ENCODE measurements at regions of chr17 and their contacts with region 1.

Region 1: DNA sequence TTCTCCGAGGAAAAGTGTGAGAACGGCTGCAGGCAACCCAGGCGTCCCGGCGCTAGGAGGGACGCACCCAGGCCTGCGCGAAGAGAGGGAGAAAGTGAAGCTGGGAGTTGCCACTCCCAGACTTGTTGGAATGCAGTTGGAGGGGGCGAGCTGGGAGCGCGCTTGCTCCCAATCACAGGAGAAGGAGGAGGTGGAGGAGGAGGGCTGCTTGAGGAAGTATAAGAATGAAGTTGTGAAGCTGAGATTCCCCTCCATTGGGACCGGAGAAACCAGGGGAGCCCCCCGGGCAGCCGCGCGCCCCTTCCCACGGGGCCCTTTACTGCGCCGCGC is at the start of gene ERBB2:
- DNase-seq: peak; percentile 79 to 87
- H3K4me3 ChIP-seq: peak within 1 kb of the TSS; percentile 84
- H3K4me3 Mint-ChIP-seq: peak within 1 kb of the TSS; percentile 99
- H3K27ac Mint-ChIP-seq: peak within 1 kb of the TSS; percentile 98
- H3K4me1 ChIP-seq: peaks cover 62% of the 10 kb centered on the region
- H3K4me1 Mint-ChIP-seq: peaks cover 42% of the 10 kb centered on the region
- H3K27me3 ChIP-seq: no peaks in the 10 kb centered on the region
- H3K27me3 Mint-ChIP-seq: no peaks in the 10 kb centered on the region
- CTCF ChIP-seq: no peak
- total RNA-seq, gene ERBB2: 121 and 124 TPM in 2 replicates

Region 2: GRCh38 chr17:39547713-39548478 is 151.9 kb before region 1 on chr17:
- CTCF ChIA-PET with region 1: no interaction called
- POLR2A ChIA-PET with region 1: no interaction called
- intact Hi-C with region 1: no loop called
- DNase-seq: peak; percentile 57 to 77
- H3K4me3 ChIP-seq: no peak overlapping the region
- H3K4me3 Mint-ChIP-seq: no peak overlapping the region
- H3K27ac Mint-ChIP-seq: no peak overlapping the region
- H3K4me1 ChIP-seq: no peaks in the 10 kb centered on the region
- H3K4me1 Mint-ChIP-seq: no peaks in the 10 kb centered on the region
- H3K27me3 ChIP-seq: no peaks in the 10 kb centered on the region
- H3K27me3 Mint-ChIP-seq: no peaks in the 10 kb centered on the region
- CTCF ChIP-seq: peak; percentile 90 to 98

Region 3: GRCh38 chr17:39563476-39563875 is 136.3 kb before region 1 on chr17:
- CTCF ChIA-PET with region 1: no interaction called
- POLR2A ChIA-PET with region 1: no interaction called
- intact Hi-C with region 1: no loop called
- DNase-seq: no peak
- H3K4me3 ChIP-seq: no peak overlapping the region
- H3K4me3 Mint-ChIP-seq: no peak overlapping the region
- H3K27ac Mint-ChIP-seq: no peak overlapping the region
- H3K4me1 ChIP-seq: no peaks in the 10 kb centered on the region
- H3K4me1 Mint-ChIP-seq: peaks cover 7% of the 10 kb centered on the region
- H3K27me3 ChIP-seq: no peaks in the 10 kb centered on the region
- H3K27me3 Mint-ChIP-seq: no peaks in the 10 kb centered on the region
- CTCF ChIP-seq: no peak

Region 4: DNA sequence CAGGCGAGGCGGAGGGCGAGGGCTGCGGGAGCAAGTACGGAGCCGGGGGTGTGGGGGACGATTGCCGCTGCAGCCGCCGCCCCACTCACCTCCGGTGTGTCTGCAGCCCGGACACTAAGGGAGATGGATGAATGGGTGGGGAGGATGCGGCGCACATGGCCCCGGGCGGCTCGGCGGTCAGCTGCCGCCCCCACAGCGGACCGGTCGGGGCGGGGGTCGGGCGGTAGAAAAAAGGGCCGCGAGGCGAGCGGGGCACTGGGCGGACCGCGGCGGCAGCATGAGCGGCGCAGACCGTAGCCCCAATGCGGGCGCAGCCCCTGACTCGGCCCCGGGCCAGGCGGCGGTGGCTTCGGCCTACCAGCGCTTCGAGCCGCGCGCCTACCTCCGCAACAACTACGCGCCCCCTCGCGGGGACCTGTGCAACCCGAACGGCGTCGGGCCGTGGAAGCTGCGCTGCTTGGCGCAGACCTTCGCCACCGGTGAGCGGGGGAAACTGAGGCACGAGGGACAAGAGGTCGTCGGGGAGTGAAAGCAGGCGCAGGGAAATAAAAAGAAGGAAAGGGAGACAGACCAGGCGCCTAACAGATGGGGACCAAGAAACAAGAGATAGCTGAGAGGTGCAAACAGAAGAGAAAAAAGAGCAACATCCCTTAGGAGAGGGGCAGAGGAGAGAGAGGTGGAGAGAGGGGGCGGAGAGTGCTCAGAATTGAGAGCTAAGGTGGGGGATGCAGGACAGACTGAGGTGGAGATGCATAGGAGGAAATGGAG is 31.4 kb before region 1 on chr17 and contains the start of gene PNMT:
- CTCF ChIA-PET with region 1: interaction called, 15 read pairs
- POLR2A ChIA-PET with region 1: no interaction called
- intact Hi-C with region 1: no loop called
- DNase-seq: peak; percentile 73 to 85
- H3K4me3 ChIP-seq: peak within 1 kb of the TSS; percentile 32
- H3K4me3 Mint-ChIP-seq: peak within 1 kb of the TSS; percentile 3
- H3K27ac Mint-ChIP-seq: no peak within 1 kb of the TSS
- H3K4me1 ChIP-seq: peaks cover 7% of the 10 kb centered on the region; the same call in 1 of the 2 replicates
- H3K4me1 Mint-ChIP-seq: peaks cover 6% of the 10 kb centered on the region
- H3K27me3 ChIP-seq: no peaks in the 10 kb centered on the region
- H3K27me3 Mint-ChIP-seq: peaks cover 4% of the 10 kb centered on the region
- CTCF ChIP-seq: peak; percentile 68 to 79
- total RNA-seq, gene PNMT: not detected in 2 replicates

Region 5: GRCh38 chr17:39676198-39676819 is 23.5 kb before region 1 on chr17:
- CTCF ChIA-PET with region 1: interaction called, 15 read pairs
- POLR2A ChIA-PET with region 1: no interaction called
- intact Hi-C with region 1: loop called (anchors 1 kb)
- DNase-seq: no peak
- H3K4me3 ChIP-seq: no peak overlapping the region
- H3K4me3 Mint-ChIP-seq: no peak overlapping the region
- H3K27ac Mint-ChIP-seq: no peak overlapping the region
- H3K4me1 ChIP-seq: peaks cover 31% of the 10 kb centered on the region
- H3K4me1 Mint-ChIP-seq: peaks cover 14% of the 10 kb centered on the region
- H3K27me3 ChIP-seq: no peaks in the 10 kb centered on the region
- H3K27me3 Mint-ChIP-seq: no peaks in the 10 kb centered on the region
- CTCF ChIP-seq: no peak

Region 6: DNA sequence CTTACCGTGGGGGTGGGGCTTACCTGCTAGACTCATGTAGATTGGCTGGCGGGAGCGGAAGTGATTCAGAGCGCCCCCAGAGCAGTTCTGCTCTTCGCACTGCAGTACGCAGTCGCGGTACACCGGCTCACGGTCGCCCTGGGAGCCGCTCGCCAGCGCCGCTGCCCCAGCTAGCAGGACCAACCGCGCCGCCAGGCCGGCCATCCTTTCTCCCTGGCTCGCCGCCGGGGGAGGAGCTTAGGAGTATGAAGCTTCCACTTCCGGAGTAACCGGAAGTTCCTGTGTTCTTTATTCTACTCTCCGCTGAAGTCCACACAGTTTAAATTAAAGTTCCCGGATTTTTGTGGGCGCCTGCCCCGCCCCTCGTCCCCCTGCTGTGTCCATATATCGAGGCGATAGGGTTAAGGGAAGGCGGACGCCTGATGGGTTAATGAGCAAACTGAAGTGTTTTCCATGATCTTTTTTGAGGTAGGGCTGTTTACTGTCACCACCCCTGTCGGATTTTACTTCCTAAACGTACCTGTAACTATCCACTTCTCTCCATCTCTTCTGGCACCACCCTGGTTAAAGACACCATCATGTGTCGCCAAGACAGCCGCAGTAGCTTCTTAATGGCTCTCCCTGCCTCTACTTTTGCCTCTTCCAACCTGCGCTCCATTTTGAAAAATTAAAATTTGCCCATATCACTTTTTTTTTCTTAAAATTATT is 11.8 kb before region 1 on chr17 and contains the start of gene PGAP3:
- CTCF ChIA-PET with region 1: interaction called, 20 read pairs
- POLR2A ChIA-PET with region 1: interaction called, 32 read pairs
- intact Hi-C with region 1: loop called (anchors 1 kb)
- DNase-seq: peak; percentile 95 to 96
- H3K4me3 ChIP-seq: peak within 1 kb of the TSS; percentile 74
- H3K4me3 Mint-ChIP-seq: peak within 1 kb of the TSS; percentile 80
- H3K27ac Mint-ChIP-seq: peak within 1 kb of the TSS; percentile 73
- H3K4me1 ChIP-seq: peaks cover 20% of the 10 kb centered on the region
- H3K4me1 Mint-ChIP-seq: peaks cover 11% of the 10 kb centered on the region
- H3K27me3 ChIP-seq: no peaks in the 10 kb centered on the region
- H3K27me3 Mint-ChIP-seq: no peaks in the 10 kb centered on the region
- CTCF ChIP-seq: no peak
- total RNA-seq, gene PGAP3: 14.7 and 17.4 TPM in 2 replicates

Region 7: DNA sequence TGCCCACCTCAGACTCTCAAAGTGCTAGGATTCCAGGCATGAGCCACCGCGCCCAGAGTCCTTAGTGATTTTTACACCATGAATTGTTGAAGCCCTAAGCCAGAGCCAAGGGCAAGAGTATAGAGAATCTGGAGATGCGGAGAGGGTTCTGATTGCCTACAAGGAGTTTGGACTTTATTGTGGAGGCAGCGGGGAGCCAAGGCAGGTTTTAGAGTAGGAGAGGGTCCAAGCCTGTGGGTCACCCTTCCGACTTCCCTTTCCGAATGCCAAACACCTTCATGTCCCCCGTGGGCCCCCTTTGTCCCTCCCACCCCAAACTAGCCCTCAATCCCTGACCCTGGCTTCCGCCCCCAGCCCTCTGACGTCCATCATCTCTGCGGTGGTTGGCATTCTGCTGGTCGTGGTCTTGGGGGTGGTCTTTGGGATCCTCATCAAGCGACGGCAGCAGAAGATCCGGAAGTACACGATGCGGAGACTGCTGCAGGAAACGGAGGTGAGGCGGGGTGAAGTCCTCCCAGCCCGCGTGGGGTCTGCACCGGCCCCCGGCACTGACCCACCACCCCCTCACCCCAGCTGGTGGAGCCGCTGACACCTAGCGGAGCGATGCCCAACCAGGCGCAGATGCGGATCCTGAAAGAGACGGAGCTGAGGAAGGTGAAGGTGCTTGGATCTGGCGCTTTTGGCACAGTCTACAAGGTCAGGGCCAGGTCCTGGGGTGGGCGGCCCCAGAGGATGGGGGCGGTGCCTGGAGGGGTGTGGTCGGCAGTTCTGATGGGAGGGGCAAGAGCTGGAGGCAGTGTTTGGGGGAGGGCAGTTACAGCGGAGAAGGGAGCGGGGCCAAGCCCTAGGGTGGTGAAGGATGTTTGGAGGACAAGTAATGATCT is 23.4 kb after region 1 on chr17:
- CTCF ChIA-PET with region 1: interaction called, 13 read pairs
- POLR2A ChIA-PET with region 1: interaction called, 5 read pairs
- intact Hi-C with region 1: no loop called
- DNase-seq: peak in 1 of 2 experiments; percentile 47
- H3K4me3 ChIP-seq: no peak overlapping the region
- H3K4me3 Mint-ChIP-seq: no peak overlapping the region
- H3K27ac Mint-ChIP-seq: no peak overlapping the region
- H3K4me1 ChIP-seq: no peaks in the 10 kb centered on the region
- H3K4me1 Mint-ChIP-seq: no peaks in the 10 kb centered on the region
- H3K27me3 ChIP-seq: no peaks in the 10 kb centered on the region
- H3K27me3 Mint-ChIP-seq: no peaks in the 10 kb centered on the region
- CTCF ChIP-seq: no peak

Region 8: GRCh38 chr17:39730095-39730921 is 30.5 kb after region 1 on chr17 and contains the start of gene MIEN1:
- CTCF ChIA-PET with region 1: interaction called, 13 read pairs
- POLR2A ChIA-PET with region 1: interaction called, 22 read pairs
- intact Hi-C with region 1: no loop called
- DNase-seq: peak; percentile 92 to 98
- H3K4me3 ChIP-seq: peak within 1 kb of the TSS; percentile 57
- H3K4me3 Mint-ChIP-seq: peak within 1 kb of the TSS; percentile 84
- H3K27ac Mint-ChIP-seq: peak within 1 kb of the TSS; percentile 91
- H3K4me1 ChIP-seq: peaks cover 11% of the 10 kb centered on the region
- H3K4me1 Mint-ChIP-seq: no peaks in the 10 kb centered on the region
- H3K27me3 ChIP-seq: no peaks in the 10 kb centered on the region
- H3K27me3 Mint-ChIP-seq: no peaks in the 10 kb centered on the region
- CTCF ChIP-seq: peak; percentile 74 to 95
- total RNA-seq, gene MIEN1: 42.9 and 46.3 TPM in 2 replicates

Measured in Caco-2 (cell line).